Naive thymus-derived CD4-positive, alpha-beta T cell (primary cell): ENCODE measurements at regions of chrX and their contacts with region 1.

Region 1: GRCh38 chrX:24184018-24184417 is 34.5 kb downstream of the ZFX start:
- DNase-seq: no peak
- ATAC-seq: no peak
- H3K4me3 ChIP-seq: no peak overlapping the region
- H3K4me3 Mint-ChIP-seq: peak overlapping the region in 4 of 10 donors; percentile 20 to 37 (median 28)
- H3K27ac ChIP-seq: no peak overlapping the region
- H3K27ac Mint-ChIP-seq: peak overlapping the region in 2 of 9 donors; percentile 19 to 48
- H3K4me1 ChIP-seq: no peaks in the 10 kb centered on the region
- H3K4me1 Mint-ChIP-seq: peaks cover 5 to 58% (median 39%) of the 10 kb centered on the region in 7 donors
- H3K27me3 ChIP-seq: no peaks in the 10 kb centered on the region
- H3K27me3 Mint-ChIP-seq: no peaks in the 10 kb centered on the region

Region 2: DNA sequence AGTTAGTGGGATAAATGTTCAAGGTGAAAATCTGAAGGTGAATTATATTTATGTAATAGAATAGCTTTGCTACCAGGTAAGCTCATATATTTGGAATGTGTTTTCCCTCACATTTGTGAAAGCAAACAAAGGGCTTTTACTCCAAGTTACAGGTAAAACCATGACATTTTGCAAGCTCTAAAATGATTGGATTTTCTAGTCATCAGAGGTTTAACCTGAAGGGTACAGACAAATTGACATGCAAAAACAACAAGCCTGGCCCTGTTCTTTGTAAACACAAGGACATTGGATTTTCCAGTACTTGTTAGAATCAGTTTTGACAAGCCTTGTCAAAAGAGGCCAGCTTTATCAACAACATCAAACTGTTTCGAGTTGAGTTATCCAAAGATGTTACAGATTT is 17.2 kb after region 1 on chrX:
- CTCF ChIA-PET with region 1: no interaction called
- POLR2A ChIA-PET with region 1: no interaction called
- intact Hi-C with region 1: loop called in 1 of 2 experiments (anchors 2 kb)
- DNase-seq: no peak
- ATAC-seq: no peak
- H3K4me3 ChIP-seq: no peak overlapping the region
- H3K4me3 Mint-ChIP-seq: no peak overlapping the region
- H3K27ac ChIP-seq: no peak overlapping the region
- H3K27ac Mint-ChIP-seq: peak overlapping the region in 1 of 9 donors; percentile 41
- H3K4me1 ChIP-seq: peaks cover 0 to 9% of the 10 kb centered on the region in 2 donors
- H3K4me1 Mint-ChIP-seq: peaks cover 32 to 80% (median 59%) of the 10 kb centered on the region in 7 donors
- H3K27me3 ChIP-seq: no peaks in the 10 kb centered on the region
- H3K27me3 Mint-ChIP-seq: no peaks in the 10 kb centered on the region